Caco-2 (cell line): ENCODE measurements at regions of chr5 and their contacts with region 1.

Region 1: DNA sequence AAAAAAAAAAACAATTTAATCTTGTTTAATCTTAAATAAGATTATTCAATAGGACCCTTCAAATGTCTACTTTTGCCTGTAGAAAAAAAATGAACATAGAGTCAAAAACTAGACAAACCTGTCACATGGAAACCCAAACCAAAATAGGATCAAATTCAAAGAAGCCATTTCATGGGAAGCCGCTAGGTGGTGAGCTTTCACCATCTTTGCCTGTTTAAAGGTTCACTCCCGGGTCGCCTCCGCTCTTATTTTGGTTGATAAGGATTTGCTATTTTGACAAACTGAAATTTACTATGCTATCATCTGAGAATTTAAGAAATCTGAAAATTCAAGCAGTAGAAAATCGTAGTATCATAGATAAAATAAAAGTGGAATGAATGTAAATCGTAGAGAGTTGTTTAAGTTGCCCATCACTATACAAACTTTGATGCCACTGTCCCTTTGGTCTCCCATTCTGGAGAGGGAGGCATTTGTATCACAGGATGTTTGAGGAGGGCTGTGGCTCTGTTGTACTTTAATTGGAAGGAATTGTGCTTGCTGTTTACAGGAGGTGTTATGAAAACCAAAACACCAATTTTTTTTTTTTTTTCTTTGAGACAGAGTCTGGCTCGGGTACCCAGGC is 43.5 kb upstream of the DNAH5 start:
- DNase-seq: peak; percentile 52 to 68
- H3K4me3 ChIP-seq: no peak overlapping the region
- H3K4me3 Mint-ChIP-seq: no peak overlapping the region
- H3K27ac Mint-ChIP-seq: no peak overlapping the region
- H3K4me1 ChIP-seq: no peaks in the 10 kb centered on the region
- H3K4me1 Mint-ChIP-seq: no peaks in the 10 kb centered on the region
- H3K27me3 ChIP-seq: no peaks in the 10 kb centered on the region; the same call in 1 of the 2 replicates
- H3K27me3 Mint-ChIP-seq: no peaks in the 10 kb centered on the region
- CTCF ChIP-seq: peak; percentile 75 to 82

Region 2: GRCh38 chr5:14035859-14036440 is 48.0 kb after region 1 on chr5:
- CTCF ChIA-PET with region 1: no interaction called
- POLR2A ChIA-PET with region 1: no interaction called
- intact Hi-C with region 1: loop called (anchors 1 kb)
- DNase-seq: peak; percentile 49 to 71
- H3K4me3 ChIP-seq: no peak overlapping the region
- H3K4me3 Mint-ChIP-seq: peak overlapping the region; percentile 56
- H3K27ac Mint-ChIP-seq: peak overlapping the region; percentile 89
- H3K4me1 ChIP-seq: peaks cover 63% of the 10 kb centered on the region
- H3K4me1 Mint-ChIP-seq: peaks cover 12% of the 10 kb centered on the region
- H3K27me3 ChIP-seq: no peaks in the 10 kb centered on the region
- H3K27me3 Mint-ChIP-seq: no peaks in the 10 kb centered on the region
- CTCF ChIP-seq: no peak

Region 3: GRCh38 chr5:14063138-14063537 is 75.2 kb after region 1 on chr5:
- CTCF ChIA-PET with region 1: no interaction called
- POLR2A ChIA-PET with region 1: no interaction called
- intact Hi-C with region 1: no loop called
- DNase-seq: no peak
- H3K4me3 ChIP-seq: no peak overlapping the region
- H3K4me3 Mint-ChIP-seq: no peak overlapping the region
- H3K27ac Mint-ChIP-seq: no peak overlapping the region
- H3K4me1 ChIP-seq: no peaks in the 10 kb centered on the region
- H3K4me1 Mint-ChIP-seq: no peaks in the 10 kb centered on the region
- H3K27me3 ChIP-seq: no peaks in the 10 kb centered on the region
- H3K27me3 Mint-ChIP-seq: no peaks in the 10 kb centered on the region
- CTCF ChIP-seq: no peak

Region 4: DNA sequence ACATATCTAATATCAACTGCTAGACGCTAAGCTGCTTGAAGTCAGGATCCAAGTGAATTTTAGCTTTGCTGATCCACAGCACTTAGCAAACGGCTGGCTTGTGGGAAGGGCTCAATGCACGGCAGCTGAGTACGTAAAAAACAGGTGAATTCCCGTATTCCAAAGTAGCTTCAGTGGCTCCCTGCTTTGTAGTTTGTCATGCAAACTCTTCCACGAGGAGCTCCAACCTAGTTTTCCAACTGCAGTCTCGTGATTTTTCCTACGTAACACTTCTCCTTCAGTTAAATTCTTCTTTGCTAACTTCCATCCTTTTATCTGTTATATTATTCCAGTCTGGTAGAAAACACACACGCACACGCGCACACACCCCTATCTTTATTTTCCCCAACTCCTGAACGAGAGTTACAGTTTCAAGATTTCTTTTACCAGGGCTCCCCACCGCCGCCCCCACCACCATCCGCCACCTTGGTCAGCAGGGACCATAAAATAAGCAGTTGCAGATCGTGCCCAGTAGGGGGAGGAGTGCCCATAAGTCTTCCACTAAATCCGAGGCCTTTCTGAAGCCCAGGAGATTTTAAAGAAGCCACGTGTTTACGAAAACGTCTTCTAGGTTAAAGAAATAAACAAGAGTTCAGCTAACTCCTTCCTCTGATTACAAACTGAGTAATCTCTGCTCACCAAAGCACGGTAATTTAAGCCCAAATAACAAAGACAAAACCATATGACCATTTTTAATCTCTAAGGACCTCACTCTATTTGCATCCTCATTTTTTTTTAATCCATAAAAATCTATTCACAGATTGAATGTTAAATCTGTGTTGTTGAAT is 120.4 kb after region 1 on chr5:
- CTCF ChIA-PET with region 1: no interaction called
- POLR2A ChIA-PET with region 1: no interaction called
- intact Hi-C with region 1: loop called (anchors 5 kb)
- DNase-seq: peak; percentile 57 to 62
- H3K4me3 ChIP-seq: no peak overlapping the region
- H3K4me3 Mint-ChIP-seq: no peak overlapping the region
- H3K27ac Mint-ChIP-seq: no peak overlapping the region
- H3K4me1 ChIP-seq: no peaks in the 10 kb centered on the region
- H3K4me1 Mint-ChIP-seq: no peaks in the 10 kb centered on the region
- H3K27me3 ChIP-seq: no peaks in the 10 kb centered on the region
- H3K27me3 Mint-ChIP-seq: no peaks in the 10 kb centered on the region
- CTCF ChIP-seq: peak; percentile 67 to 81

Region 5: GRCh38 chr5:14208071-14209021 is 220.4 kb after region 1 on chr5:
- CTCF ChIA-PET with region 1: no interaction called
- POLR2A ChIA-PET with region 1: no interaction called
- intact Hi-C with region 1: loop called (anchors 5 kb)
- DNase-seq: peak; percentile 53 to 63
- H3K4me3 ChIP-seq: no peak overlapping the region
- H3K4me3 Mint-ChIP-seq: no peak overlapping the region
- H3K27ac Mint-ChIP-seq: no peak overlapping the region
- H3K4me1 ChIP-seq: peaks cover 32% of the 10 kb centered on the region
- H3K4me1 Mint-ChIP-seq: peaks cover 48% of the 10 kb centered on the region
- H3K27me3 ChIP-seq: no peaks in the 10 kb centered on the region
- H3K27me3 Mint-ChIP-seq: no peaks in the 10 kb centered on the region
- CTCF ChIP-seq: no peak

Region 6: DNA sequence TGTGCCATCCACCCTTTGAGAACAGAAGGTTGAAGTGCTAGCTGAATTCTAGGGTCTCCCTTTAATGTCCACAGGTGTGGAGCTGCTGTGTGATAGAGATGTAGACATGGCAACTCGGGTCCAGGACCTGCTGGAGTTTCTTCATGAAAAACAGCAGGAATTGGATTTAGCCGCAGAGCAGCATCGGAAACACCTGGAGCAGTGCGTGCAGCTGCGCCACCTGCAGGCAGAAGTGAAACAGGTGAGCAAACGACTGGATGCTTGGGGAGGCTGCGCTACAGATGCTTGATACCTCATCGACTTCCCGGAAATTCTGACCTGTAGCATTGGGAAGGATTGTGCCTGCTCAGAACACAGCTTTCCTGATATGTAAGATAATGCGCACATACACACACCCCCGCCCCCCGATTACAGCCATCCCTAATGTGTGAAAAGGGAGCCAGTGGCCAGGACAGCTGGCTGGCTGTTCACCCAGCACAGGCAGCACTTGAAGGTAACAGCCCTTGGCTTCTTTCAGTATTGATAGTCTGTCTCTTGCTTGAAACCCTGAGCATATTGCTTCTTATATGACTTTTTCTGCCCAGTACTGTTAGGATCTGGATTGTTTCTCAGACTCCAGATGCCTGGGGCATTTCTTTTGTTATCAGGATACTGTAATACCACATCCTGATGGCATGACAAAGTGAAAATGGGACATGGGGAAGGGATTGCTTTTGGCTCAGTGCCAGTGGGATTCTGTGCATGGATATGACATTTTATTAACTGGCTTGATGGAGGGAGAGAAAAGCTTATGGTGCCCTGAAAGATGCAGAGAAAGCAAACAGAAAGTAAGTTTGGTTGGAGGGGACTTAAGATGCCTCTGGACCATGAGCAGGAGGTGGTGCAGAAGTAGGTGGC is 376.9 kb after region 1 on chr5:
- CTCF ChIA-PET with region 1: no interaction called
- POLR2A ChIA-PET with region 1: no interaction called
- intact Hi-C with region 1: loop called (anchors 1 kb)
- DNase-seq: peak; percentile 60 to 63
- H3K4me3 ChIP-seq: no peak overlapping the region
- H3K4me3 Mint-ChIP-seq: no peak overlapping the region
- H3K27ac Mint-ChIP-seq: no peak overlapping the region
- H3K4me1 ChIP-seq: no peaks in the 10 kb centered on the region
- H3K4me1 Mint-ChIP-seq: no peaks in the 10 kb centered on the region
- H3K27me3 ChIP-seq: no peaks in the 10 kb centered on the region
- H3K27me3 Mint-ChIP-seq: no peaks in the 10 kb centered on the region
- CTCF ChIP-seq: peak; percentile 72 to 90